ENCODE measurements at regions of chr19 and their contacts with region 1.

Region 1: DNA sequence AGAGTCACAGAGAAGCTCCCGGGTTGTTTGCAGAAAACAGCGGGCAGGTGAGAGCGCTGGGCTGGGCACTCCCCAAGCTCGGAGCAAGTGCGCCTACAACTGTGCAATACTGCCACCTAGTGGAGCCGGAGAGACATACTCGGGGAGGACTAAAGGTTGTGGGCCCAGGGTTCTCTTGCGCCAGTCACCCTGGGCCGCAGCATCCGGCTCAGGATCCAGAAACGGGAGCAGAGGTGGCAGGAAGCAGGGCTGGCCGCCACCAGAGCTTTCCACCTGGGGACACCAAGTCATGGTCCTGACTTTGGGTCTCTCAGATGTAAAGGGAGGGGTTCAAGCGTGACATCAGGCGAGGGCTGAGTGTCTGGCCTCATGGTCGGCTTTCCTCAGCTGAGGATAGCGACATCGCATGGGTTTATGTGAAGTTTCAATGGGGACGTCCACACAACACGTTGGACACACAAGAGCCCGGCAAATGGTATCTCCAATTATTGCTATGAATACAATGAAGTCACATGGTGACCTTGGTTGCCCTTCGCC is 11.2 kb upstream of the KLK4 start:
- DNase-seq: peak; percentile 88
- H3K4me3 Mint-ChIP-seq: no peak overlapping the region
- H3K27ac Mint-ChIP-seq: no peak overlapping the region
- H3K4me1 Mint-ChIP-seq: peaks cover 7% of the 10 kb centered on the region
- H3K27me3 Mint-ChIP-seq: peaks cover 28% of the 10 kb centered on the region

Region 2: GRCh38 chr19:50607874-50608785 is 314.3 kb before region 1 on chr19:
- CTCF ChIA-PET with region 1: interaction called, 3 read pairs
- intact Hi-C with region 1: loop called (anchors 2 kb)
- DNase-seq: peak; percentile 91
- H3K4me3 Mint-ChIP-seq: no peak overlapping the region
- H3K27ac Mint-ChIP-seq: no peak overlapping the region
- H3K4me1 Mint-ChIP-seq: peaks cover 10% of the 10 kb centered on the region
- H3K27me3 Mint-ChIP-seq: peaks cover 32% of the 10 kb centered on the region

Region 3: GRCh38 chr19:50777754-50778303 is 144.6 kb before region 1 on chr19:
- CTCF ChIA-PET with region 1: interaction called, 4 read pairs
- intact Hi-C with region 1: loop called (anchors 1 kb)
- DNase-seq: no peak
- H3K4me3 Mint-ChIP-seq: no peak overlapping the region
- H3K27ac Mint-ChIP-seq: no peak overlapping the region
- H3K4me1 Mint-ChIP-seq: peaks cover 3% of the 10 kb centered on the region
- H3K27me3 Mint-ChIP-seq: peaks cover 57% of the 10 kb centered on the region

Region 4: GRCh38 chr19:50817941-50818858 is 104.2 kb before region 1 on chr19:
- CTCF ChIA-PET with region 1: no interaction called
- intact Hi-C with region 1: no loop called
- DNase-seq: peak; percentile 72
- H3K4me3 Mint-ChIP-seq: peak overlapping the region; percentile 67
- H3K27ac Mint-ChIP-seq: peak overlapping the region; percentile 37
- H3K4me1 Mint-ChIP-seq: peaks cover 43% of the 10 kb centered on the region
- H3K27me3 Mint-ChIP-seq: peaks cover 64% of the 10 kb centered on the region

Region 5: DNA sequence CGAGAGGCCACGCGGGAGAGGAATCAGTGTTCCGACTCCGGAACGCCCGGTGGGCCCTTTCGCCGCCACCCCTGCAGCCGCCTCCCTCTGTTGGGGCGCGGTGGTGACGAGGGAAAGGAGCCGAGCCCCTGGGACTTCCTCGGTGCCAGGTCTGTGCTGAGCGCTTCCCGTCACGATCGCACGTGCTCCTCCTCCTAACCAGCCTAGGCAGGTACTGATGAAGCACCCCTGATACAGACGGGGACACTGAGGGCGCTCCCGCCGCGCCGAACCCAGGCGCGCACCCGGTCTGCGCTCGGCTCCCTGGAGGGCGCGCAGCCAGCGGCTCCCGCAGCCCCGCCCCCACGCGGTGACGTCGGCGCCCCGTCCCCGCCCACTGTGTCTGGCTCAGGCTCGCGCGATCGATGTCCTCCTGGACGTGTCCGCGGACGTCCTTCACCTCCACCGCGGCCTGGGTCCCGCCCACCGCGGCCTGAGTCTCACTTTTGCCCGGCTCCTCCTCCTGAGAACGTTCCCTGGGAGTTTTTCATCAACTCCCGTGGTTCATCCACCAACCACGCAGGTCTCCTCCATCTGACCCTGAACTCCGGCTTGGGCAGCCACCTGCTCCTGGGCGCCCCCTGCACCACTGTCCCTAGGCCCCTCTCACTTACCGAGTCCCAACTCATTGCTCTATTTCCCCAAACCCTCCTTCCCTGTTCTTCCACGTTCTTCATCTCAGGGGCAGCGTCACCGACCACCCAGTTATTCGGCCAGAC is 86.4 kb before region 1 on chr19:
- CTCF ChIA-PET with region 1: interaction called, 3 read pairs
- intact Hi-C with region 1: loop called (anchors 5 kb)
- DNase-seq: peak; percentile 78
- H3K4me3 Mint-ChIP-seq: peak overlapping the region; percentile 73
- H3K27ac Mint-ChIP-seq: no peak overlapping the region
- H3K4me1 Mint-ChIP-seq: peaks cover 7% of the 10 kb centered on the region
- H3K27me3 Mint-ChIP-seq: peaks cover 47% of the 10 kb centered on the region

Measured in activated naive CD4-positive, alpha-beta T cell treated with anti-CD3 and anti-CD28 coated beads for 36 hours (primary cell).